ENCODE measurements at regions of chr22 and their contacts with region 1.

Region 1: GRCh38 chr22:41285820-41286638 is at the start of gene RANGAP1:
- DNase-seq: peak; percentile 99
- ATAC-seq: peak; percentile 94
- H3K4me3 Mint-ChIP-seq: peak within 1 kb of the TSS; percentile 94
- H3K27ac Mint-ChIP-seq: peak within 1 kb of the TSS; percentile 99
- H3K4me1 Mint-ChIP-seq: peaks cover 25% of the 10 kb centered on the region
- H3K27me3 Mint-ChIP-seq: no peaks in the 10 kb centered on the region
- CTCF ChIP-seq: no peak
- total RNA-seq, gene RANGAP1: 150 to 151 TPM

Region 2: DNA sequence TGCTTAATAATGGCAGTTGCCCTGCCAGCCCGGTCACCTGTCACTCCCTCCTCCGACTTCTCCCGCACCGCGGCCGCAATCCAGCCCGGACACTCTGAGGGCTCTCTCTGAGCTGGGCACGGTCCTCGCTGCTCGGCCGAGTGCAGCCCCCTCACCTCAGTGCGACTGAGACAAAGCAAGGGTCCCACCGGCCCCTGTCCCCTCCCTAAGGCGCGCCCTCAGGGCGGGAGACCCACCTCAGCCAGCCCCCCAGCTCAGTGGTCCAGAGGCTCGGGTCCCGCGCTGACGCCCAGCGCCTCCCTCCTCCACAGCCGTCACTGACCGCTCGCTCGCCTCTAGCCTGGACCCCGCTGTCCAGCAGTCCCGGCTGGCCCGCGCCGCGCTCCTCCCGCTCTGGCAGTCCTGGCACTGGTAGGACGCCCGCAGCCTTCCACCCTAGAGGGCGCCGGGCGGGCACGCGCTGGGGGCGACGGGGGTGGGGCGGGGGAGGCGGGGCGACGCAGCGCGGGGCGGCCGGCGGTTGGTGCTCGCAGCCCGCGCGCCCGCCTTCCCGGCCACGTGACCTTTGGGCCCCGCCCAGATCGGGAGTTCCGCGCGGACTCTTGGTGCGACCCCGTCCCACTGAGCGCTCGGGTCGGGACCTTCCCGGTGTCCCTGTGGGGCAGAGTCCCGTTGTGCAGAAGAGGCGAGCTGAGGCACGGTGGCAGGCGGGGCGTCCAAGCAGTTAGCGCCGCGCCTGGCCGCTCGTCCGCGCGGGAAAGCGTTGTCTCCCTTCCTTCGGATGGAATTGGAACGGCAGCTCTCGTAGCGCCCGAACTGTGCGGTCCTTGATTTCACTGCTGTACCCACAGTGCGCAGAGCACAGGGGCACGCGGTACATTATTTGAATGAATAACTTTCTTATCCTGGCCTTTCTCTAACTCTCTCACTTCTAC is 88.7 kb before region 1 on chr22:
- CTCF ChIA-PET with region 1: no interaction called
- POLR2A ChIA-PET with region 1: no interaction called
- intact Hi-C with region 1: no loop called
- DNase-seq: peak; percentile 79
- ATAC-seq: peak; percentile 90
- H3K4me3 Mint-ChIP-seq: peak overlapping the region; percentile 74
- H3K27ac Mint-ChIP-seq: no peak overlapping the region
- H3K4me1 Mint-ChIP-seq: peaks cover 7% of the 10 kb centered on the region
- H3K27me3 Mint-ChIP-seq: peaks cover 9% of the 10 kb centered on the region
- CTCF ChIP-seq: no peak

Region 3: GRCh38 chr22:41301105-41302020 is 15.3 kb after region 1 on chr22 and contains the start of gene ZC3H7B:
- CTCF ChIA-PET with region 1: interaction called, 9 read pairs
- POLR2A ChIA-PET with region 1: interaction called, 33 read pairs
- intact Hi-C with region 1: no loop called
- DNase-seq: peak; percentile 87
- ATAC-seq: peak; percentile 96
- H3K4me3 Mint-ChIP-seq: peak within 1 kb of the TSS; percentile 77
- H3K27ac Mint-ChIP-seq: peak within 1 kb of the TSS; percentile 84
- H3K4me1 Mint-ChIP-seq: peaks cover 36% of the 10 kb centered on the region
- H3K27me3 Mint-ChIP-seq: no peaks in the 10 kb centered on the region
- CTCF ChIP-seq: peak; percentile 50
- total RNA-seq, gene ZC3H7B: 46.1 to 47.9 TPM

Region 4: GRCh38 chr22:41311487-41311886 is 25.5 kb after region 1 on chr22:
- CTCF ChIA-PET with region 1: no interaction called
- POLR2A ChIA-PET with region 1: interaction called, 33 read pairs
- intact Hi-C with region 1: no loop called
- DNase-seq: no peak
- ATAC-seq: no peak
- H3K4me3 Mint-ChIP-seq: no peak overlapping the region
- H3K27ac Mint-ChIP-seq: peak overlapping the region; percentile 18
- H3K4me1 Mint-ChIP-seq: peaks cover 34% of the 10 kb centered on the region
- H3K27me3 Mint-ChIP-seq: no peaks in the 10 kb centered on the region
- CTCF ChIP-seq: no peak

Region 5: GRCh38 chr22:41381329-41382097 is 95.5 kb after region 1 on chr22 and contains the start of gene TEF:
- CTCF ChIA-PET with region 1: no interaction called
- POLR2A ChIA-PET with region 1: interaction called, 13 read pairs
- intact Hi-C with region 1: no loop called
- DNase-seq: peak; percentile 99
- ATAC-seq: peak; percentile 90
- H3K4me3 Mint-ChIP-seq: peak within 1 kb of the TSS; percentile 85
- H3K27ac Mint-ChIP-seq: peak within 1 kb of the TSS; percentile 96
- H3K4me1 Mint-ChIP-seq: peaks cover 16% of the 10 kb centered on the region
- H3K27me3 Mint-ChIP-seq: no peaks in the 10 kb centered on the region
- CTCF ChIP-seq: no peak
- total RNA-seq, gene TEF: 1.4 to 2.0 TPM

Region 6: DNA sequence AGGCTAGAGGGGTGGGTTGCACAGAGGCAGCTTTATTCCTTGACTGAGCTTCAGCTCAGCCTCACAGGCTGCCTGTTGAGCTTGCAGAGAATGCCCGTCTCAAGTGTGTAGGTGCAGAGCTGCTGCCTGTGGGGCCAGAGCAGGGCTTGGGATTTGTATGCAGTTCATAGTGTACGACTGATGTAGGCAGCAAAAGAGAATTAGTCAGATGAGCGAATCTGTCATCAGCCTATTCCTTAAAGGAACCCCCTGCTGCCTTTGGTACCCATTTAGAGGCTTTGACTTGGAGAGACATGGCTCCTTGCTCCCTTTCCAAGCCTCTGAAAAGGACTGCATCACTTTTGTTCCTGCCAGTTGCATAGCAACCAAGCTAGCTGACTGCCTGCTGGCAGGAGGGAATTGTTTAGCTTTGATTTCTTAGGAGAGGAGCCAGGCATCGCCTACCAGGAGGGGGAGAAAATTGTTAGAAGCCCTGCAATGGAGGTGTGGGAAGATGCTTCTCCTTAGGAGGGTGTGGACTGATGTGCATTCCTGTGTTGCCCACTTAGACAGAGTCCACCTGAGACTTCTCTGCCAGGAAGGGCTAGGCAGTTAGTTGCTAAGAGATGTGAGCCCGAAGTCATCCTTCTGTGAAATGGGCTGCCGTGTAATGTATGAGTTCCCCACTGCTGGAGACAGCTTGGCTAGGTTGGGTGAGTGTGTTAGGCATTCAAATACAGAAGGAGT is 193.8 kb after region 1 on chr22:
- CTCF ChIA-PET with region 1: no interaction called
- POLR2A ChIA-PET with region 1: no interaction called
- intact Hi-C with region 1: no loop called
- DNase-seq: no peak
- ATAC-seq: no peak
- H3K4me3 Mint-ChIP-seq: no peak overlapping the region
- H3K27ac Mint-ChIP-seq: peak overlapping the region; percentile 25
- H3K4me1 Mint-ChIP-seq: peaks cover 39% of the 10 kb centered on the region
- H3K27me3 Mint-ChIP-seq: no peaks in the 10 kb centered on the region
- CTCF ChIP-seq: no peak

Measured in activated CD8-positive, alpha-beta T cell treated with anti-CD3 and anti-CD28 coated beads for 36 hours (primary cell).